ENCODE measurements at regions of chr2 and their contacts with region 1.

Region 1: DNA sequence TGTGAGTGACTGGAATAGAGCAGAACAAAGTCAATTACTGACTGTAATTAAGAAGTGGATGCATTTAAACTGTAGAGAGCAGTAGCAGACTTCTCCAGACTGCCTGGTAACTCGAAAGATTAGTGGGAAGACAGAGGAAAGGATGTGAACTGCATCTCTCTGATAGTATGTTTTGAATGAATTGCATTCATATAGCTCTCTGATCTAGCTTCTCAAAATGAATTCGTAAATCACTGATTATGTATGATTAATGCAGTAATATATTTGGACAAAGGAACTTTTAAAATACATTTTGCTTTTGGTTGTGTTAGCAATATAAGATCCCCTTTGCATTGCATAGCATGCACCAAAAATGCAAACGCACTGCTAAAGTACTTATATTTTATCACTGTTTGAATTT is 304.0 kb downstream of the ARHGAP15 start:
- DNase-seq: peak in 1 of 2 donors; percentile 6
- ATAC-seq: peak in 5 of 8 donors; percentile 31 to 76 (median 64)
- H3K4me3 ChIP-seq: no peak overlapping the region
- H3K27ac ChIP-seq: peak overlapping the region in 3 of 10 donors; percentile 15 to 46 (median 21)
- H3K4me1 ChIP-seq: peaks cover 0 to 14% (median 0%) of the 10 kb centered on the region in 9 donors
- H3K27me3 ChIP-seq: no peaks in the 10 kb centered on the region
- CTCF ChIP-seq: peak in 4 of 9 donors; percentile 22 to 51 (median 38)

Region 2: GRCh38 chr2:143397884-143398614 is 35.2 kb before region 1 on chr2:
- intact Hi-C with region 1: no loop called
- DNase-seq: no peak
- ATAC-seq: no peak
- H3K4me3 ChIP-seq: peak overlapping the region in 1 of 10 donors; percentile 8
- H3K27ac ChIP-seq: no peak overlapping the region
- H3K4me1 ChIP-seq: peaks cover 0 to 20% (median 0%) of the 10 kb centered on the region in 9 donors
- H3K27me3 ChIP-seq: no peaks in the 10 kb centered on the region
- CTCF ChIP-seq: no peak

Region 3: GRCh38 chr2:143477714-143478443 is 44.6 kb after region 1 on chr2:
- intact Hi-C with region 1: loop called in 1 of 10 experiments (anchors 5 kb)
- DNase-seq: no peak
- ATAC-seq: no peak
- H3K4me3 ChIP-seq: no peak overlapping the region
- H3K27ac ChIP-seq: peak overlapping the region in 2 of 10 donors; percentile 4 to 20
- H3K4me1 ChIP-seq: peaks cover 0 to 39% (median 12%) of the 10 kb centered on the region in 9 donors
- H3K27me3 ChIP-seq: no peaks in the 10 kb centered on the region
- CTCF ChIP-seq: no peak

Region 4: GRCh38 chr2:143513081-143513480 is 79.8 kb after region 1 on chr2:
- intact Hi-C with region 1: loop called in 1 of 10 experiments (anchors 10 kb)
- DNase-seq: peak; percentile 16 to 32
- ATAC-seq: peak in 7 of 8 donors; percentile 80 to 89 (median 83)
- H3K4me3 ChIP-seq: no peak overlapping the region
- H3K27ac ChIP-seq: peak overlapping the region in 2 of 10 donors; percentile 3 to 27
- H3K4me1 ChIP-seq: peaks cover 0 to 5% (median 0%) of the 10 kb centered on the region in 9 donors
- H3K27me3 ChIP-seq: no peaks in the 10 kb centered on the region
- CTCF ChIP-seq: peak; percentile 44 to 77 (median 74)

Region 5: GRCh38 chr2:143524119-143524553 is 90.9 kb after region 1 on chr2:
- intact Hi-C with region 1: loop called in 2 of 10 experiments (anchors 5 to 10 kb)
- DNase-seq: no peak
- ATAC-seq: peak in 5 of 8 donors; percentile 6 to 60 (median 52)
- H3K4me3 ChIP-seq: no peak overlapping the region
- H3K27ac ChIP-seq: peak overlapping the region in 8 of 10 donors; percentile 1 to 55 (median 48)
- H3K4me1 ChIP-seq: peaks cover 0 to 50% (median 12%) of the 10 kb centered on the region in 9 donors
- H3K27me3 ChIP-seq: no peaks in the 10 kb centered on the region
- CTCF ChIP-seq: no peak

Region 6: GRCh38 chr2:143558665-143559064 is 125.4 kb after region 1 on chr2:
- intact Hi-C with region 1: no loop called
- DNase-seq: peak in 1 of 2 donors; percentile 8
- ATAC-seq: peak in 2 of 8 donors; percentile 20 to 27
- H3K4me3 ChIP-seq: no peak overlapping the region
- H3K27ac ChIP-seq: peak overlapping the region in 2 of 10 donors; percentile 4 to 11
- H3K4me1 ChIP-seq: peaks cover 0 to 28% (median 0%) of the 10 kb centered on the region in 9 donors
- H3K27me3 ChIP-seq: no peaks in the 10 kb centered on the region
- CTCF ChIP-seq: no peak

Region 7: GRCh38 chr2:143717053-143717452 is 283.8 kb after region 1 on chr2:
- intact Hi-C with region 1: loop called in 1 of 10 experiments (anchors 10 kb)
- DNase-seq: no peak
- ATAC-seq: no peak
- H3K4me3 ChIP-seq: peak overlapping the region in 6 of 10 donors; percentile 3 to 31 (median 16)
- H3K27ac ChIP-seq: no peak overlapping the region
- H3K4me1 ChIP-seq: peaks cover 0 to 19% (median 10%) of the 10 kb centered on the region in 9 donors
- H3K27me3 ChIP-seq: no peaks in the 10 kb centered on the region
- CTCF ChIP-seq: no peak

Measured in heart right ventricle (tissue), 16 donors.